Esophagus squamous epithelium (tissue), 5 donors: ENCODE measurements at regions of chr6 and their contacts with region 1.

Region 1: DNA sequence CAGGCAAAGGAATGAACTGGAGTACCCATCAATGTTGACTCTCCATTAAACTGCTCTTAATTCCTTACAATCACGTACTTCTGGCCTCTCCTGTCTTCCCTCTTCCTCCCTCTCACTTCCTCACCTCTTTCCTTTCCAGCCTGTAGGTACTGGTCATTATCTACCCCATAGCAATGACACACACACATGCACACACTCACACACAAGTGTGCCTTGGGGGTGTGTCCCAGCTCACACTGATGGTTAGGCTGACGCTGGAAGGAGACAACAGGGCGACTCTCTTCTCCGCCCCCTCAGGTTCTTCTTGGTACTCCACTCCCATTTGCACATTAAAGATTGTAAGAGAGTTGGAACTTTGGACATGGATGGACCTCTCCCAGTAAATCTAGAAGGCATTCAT is 14.0 kb upstream of the SERPINB9 start:
- DNase-seq: no peak
- H3K4me3 ChIP-seq: no peak overlapping the region
- H3K27ac ChIP-seq: no peak overlapping the region
- H3K4me1 ChIP-seq: peaks cover 0 to 12% (median 0%) of the 10 kb centered on the region in 3 donors
- H3K27me3 ChIP-seq: no peaks in the 10 kb centered on the region
- CTCF ChIP-seq: peak in 1 of 6 experiments; percentile 8
- POLR2A ChIP-seq: no peak

Region 2: GRCh38 chr6:2579241-2579761 is 337.8 kb before region 1 on chr6:
- intact Hi-C with region 1: no loop called
- DNase-seq: no peak
- H3K4me3 ChIP-seq: no peak overlapping the region
- H3K27ac ChIP-seq: peak overlapping the region; percentile 6 to 77 (median 50)
- H3K4me1 ChIP-seq: peaks cover 0 to 20% (median 0%) of the 10 kb centered on the region in 3 donors
- H3K27me3 ChIP-seq: no peaks in the 10 kb centered on the region
- CTCF ChIP-seq: no peak
- POLR2A ChIP-seq: no peak

Region 3: DNA sequence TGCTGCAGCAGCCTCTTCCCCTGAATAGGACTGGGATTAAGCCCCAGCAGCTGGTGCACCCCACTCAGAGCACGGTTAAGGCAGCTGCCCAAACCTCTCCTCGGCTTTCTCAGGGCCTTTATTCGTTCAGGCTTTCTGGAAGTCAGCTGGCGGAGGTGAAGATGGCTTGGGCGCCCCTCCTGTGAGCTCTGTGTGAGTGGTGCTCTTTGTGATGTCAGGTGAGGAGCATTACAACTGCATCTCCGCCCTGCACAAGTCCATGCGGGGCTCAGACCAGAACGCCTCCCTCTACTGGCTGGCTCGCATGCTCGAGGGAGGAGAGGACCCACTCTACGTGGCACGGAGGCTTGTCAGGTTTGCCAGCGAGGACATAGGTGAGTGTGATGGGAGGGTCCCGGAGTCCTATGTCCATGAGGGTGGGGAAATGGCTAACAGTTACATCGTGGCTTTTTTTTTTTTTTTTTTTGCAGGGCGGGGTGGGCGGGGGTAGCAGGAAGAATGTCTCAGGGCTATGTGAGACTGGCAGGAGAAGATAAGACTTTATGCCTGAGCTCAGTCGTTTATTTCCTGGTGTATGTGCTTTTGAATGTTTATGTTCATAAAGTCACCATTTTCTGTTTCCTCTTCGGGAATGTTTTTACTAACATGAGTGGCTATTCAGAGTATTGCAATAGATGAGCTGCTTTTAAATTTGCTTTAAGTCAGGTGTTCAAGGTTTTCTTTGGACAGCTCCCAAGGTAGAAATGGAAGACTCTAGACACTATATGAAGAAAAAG is 133.7 kb before region 1 on chr6:
- intact Hi-C with region 1: loop called (anchors 10 kb)
- DNase-seq: no peak
- H3K4me3 ChIP-seq: no peak overlapping the region
- H3K27ac ChIP-seq: no peak overlapping the region
- H3K4me1 ChIP-seq: peaks cover 0 to 15% (median 5%) of the 10 kb centered on the region in 3 donors
- H3K27me3 ChIP-seq: no peaks in the 10 kb centered on the region
- CTCF ChIP-seq: no peak
- POLR2A ChIP-seq: no peak

Region 4: GRCh38 chr6:2823104-2823850 is 93.8 kb before region 1 on chr6:
- intact Hi-C with region 1: no loop called
- DNase-seq: no peak
- H3K4me3 ChIP-seq: no peak overlapping the region
- H3K27ac ChIP-seq: peak overlapping the region in 3 of 4 donors; percentile 57 to 80 (median 77)
- H3K4me1 ChIP-seq: peaks cover 0 to 61% (median 7%) of the 10 kb centered on the region in 3 donors
- H3K27me3 ChIP-seq: no peaks in the 10 kb centered on the region
- CTCF ChIP-seq: no peak
- POLR2A ChIP-seq: no peak

Region 5: DNA sequence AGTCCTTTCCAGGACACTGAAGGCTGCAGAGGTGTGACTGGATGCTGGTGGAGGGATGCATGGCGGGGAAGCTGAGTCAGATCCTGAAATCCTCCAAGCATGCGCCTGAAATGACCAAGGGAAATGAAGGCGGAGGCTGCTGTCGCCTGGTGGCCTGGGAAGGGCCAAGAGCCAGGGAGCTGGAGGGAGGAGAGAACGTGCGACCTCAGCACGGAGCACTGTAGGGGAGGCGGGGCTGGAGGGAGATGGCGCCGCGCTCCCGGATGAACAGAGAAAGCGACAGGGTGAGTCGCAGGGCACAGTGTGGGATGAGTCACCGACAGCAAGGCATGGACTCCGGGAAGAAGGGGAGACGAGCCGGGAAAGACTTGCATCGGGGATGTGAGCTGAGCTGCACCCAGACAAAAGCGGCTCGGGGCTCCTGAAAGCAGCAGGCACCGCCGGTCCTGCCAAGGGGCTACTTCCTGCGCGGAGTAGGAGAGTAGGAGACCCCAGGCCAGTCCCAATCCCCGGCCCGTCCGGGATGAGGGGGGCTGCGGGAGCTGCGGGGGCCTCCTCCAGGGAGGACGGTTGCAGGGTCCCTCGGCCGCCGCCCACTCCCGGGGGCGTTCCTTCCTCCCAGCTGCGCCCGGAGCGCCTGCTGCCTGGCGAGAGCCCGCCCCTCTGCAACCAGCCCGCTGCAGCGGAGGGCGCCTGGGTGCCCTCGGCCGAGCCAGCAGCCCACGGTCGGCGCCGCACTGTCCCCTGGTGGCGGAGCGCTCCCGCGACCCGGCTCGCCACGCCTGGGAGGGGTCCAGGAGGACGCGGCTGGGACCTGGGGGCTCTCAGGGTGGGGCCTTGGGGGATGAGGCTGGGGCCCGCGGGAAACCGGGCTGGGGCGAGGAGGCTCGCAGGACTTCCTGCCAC is 71.6 kb after region 1 on chr6:
- intact Hi-C with region 1: no loop called
- DNase-seq: peak; percentile 57
- H3K4me3 ChIP-seq: peak overlapping the region; percentile 85 to 94 (median 90)
- H3K27ac ChIP-seq: peak overlapping the region; percentile 98 to 99 (median 98)
- H3K4me1 ChIP-seq: peaks cover 12 to 54% (median 29%) of the 10 kb centered on the region in 3 donors
- H3K27me3 ChIP-seq: no peaks in the 10 kb centered on the region
- CTCF ChIP-seq: peak; percentile 76 to 93 (median 89)
- POLR2A ChIP-seq: peak in 2 of 4 donors; percentile 34 to 44